PC-9 (cell line): ENCODE measurements at regions of chr16 and their contacts with region 1.

Region 1: DNA sequence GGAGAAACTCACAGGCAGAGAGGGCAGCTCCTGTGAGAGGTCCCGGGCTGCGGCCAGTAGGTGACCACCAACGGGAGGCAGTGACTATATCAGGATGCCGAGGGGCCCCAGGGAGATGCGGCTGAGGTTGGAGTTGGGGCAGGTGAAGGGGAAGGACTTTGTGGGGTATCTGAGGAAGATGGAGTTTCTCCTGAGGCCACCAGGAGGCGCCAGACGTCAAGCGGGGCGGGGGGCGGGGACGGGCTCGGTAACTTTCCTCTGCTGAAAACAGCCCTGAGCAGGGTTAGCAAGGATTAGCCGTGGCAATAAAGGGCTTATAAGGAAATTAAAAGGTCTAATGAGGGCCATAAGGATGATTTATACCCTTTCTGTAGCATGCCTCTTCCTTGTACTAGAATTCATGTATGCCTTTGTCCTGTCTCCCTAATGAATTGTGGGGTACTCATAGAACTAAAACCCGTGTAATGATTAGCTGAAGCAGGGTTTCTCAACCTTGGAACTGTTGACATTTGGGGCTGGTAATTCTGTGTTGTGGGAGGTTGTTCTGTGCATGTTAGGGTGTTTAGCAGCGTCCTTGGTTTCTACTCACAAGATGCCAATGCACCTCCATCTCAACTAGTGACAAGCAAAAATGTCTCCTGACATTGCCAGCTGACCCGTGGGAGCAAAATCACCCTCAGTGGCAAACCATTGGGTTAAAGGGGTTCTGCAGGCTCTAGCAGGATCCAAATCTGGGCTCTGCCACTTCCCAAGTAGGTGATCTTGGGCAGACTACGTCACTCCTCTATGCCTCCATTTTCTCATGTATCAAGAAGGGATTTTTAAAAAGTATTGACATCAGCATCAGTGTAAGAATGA is 74.8 kb upstream of the GRIN2A start:
- DNase-seq: peak in 1 of 2 experiments; percentile 16
- H3K4me3 ChIP-seq: no peak overlapping the region
- H3K27ac ChIP-seq: no peak overlapping the region
- H3K4me1 ChIP-seq: no peaks in the 10 kb centered on the region
- H3K27me3 ChIP-seq: peaks cover 31% of the 10 kb centered on the region
- CTCF ChIP-seq: peak; percentile 85

Region 2: DNA sequence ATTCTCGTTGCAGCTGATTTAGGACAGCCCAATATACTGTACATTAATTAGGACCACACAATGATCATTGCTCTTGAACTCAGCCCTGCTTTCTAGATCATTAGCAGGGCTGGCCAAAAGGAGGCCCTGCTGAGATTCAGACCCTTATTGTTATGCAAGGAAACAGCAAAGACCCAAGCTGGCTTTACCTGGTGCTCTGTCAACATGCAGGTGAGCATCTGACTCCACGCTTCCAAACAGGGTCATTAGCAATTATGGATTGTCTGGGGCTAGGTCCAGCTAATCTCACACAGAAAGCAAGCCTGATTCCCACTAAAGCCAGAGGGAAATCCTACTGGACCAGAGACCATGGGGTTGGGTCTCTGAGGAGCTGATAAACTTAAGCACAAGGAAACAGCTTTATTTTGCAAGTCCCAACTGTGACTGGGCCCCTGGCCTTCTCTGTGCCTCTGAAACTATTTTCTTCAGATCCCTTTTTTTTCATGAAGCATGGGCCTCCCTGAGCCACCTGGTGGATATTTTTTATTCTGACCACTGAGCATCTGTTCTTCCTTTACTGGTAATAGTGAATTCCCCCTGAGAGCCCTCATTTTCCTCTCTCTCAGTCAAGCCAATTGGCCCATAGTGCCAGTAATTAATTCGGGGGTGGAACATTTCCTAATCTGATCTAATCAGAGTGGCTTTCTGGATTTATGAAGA is 310.8 kb before region 1 on chr16:
- CTCF ChIA-PET with region 1: interaction called, 11 read pairs
- POLR2A ChIA-PET with region 1: no interaction called
- intact Hi-C with region 1: no loop called
- DNase-seq: no peak
- H3K4me3 ChIP-seq: no peak overlapping the region
- H3K27ac ChIP-seq: no peak overlapping the region
- H3K4me1 ChIP-seq: no peaks in the 10 kb centered on the region
- H3K27me3 ChIP-seq: no peaks in the 10 kb centered on the region
- CTCF ChIP-seq: no peak

Region 3: GRCh38 chr16:10918294-10919002 is 661.4 kb after region 1 on chr16:
- CTCF ChIA-PET with region 1: no interaction called
- POLR2A ChIA-PET with region 1: no interaction called
- intact Hi-C with region 1: loop called (anchors 5 kb)
- DNase-seq: peak; percentile 62 to 89
- H3K4me3 ChIP-seq: no peak overlapping the region
- H3K27ac ChIP-seq: no peak overlapping the region
- H3K4me1 ChIP-seq: no peaks in the 10 kb centered on the region
- H3K27me3 ChIP-seq: no peaks in the 10 kb centered on the region
- CTCF ChIP-seq: peak; percentile 94